ENCODE measurements at regions of chr6 and their contacts with region 1.

Region 1: DNA sequence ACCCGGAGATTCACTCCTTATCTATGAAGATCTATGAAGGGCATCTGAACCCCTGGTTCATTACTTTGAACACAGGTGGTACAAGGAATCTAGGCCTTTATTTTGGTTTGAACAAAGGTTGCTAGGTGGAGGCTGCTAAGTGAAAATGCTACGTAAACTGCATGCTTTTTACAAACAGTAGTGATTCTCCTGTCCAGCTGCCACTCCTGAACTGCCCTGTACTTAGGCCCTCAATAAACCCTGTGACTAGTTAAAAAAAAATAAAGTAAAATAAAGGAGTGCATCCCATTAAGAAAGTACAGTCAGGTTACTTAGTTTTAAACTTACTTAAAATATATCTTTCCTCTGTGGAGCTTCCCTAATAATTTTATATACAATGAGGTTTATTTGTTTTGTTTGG is 27.7 kb upstream of the ARG1 start:
- DNase-seq: no peak

Region 2: GRCh38 chr6:131492932-131493573 is 52.3 kb before region 1 on chr6:
- intact Hi-C with region 1: loop called in 1 of 2 experiments (anchors 2 kb)
- DNase-seq: no peak

Measured in posterior vena cava (tissue), 2 donors.